ENCODE measurements at regions of chr16 and their contacts with region 1.

Region 1: DNA sequence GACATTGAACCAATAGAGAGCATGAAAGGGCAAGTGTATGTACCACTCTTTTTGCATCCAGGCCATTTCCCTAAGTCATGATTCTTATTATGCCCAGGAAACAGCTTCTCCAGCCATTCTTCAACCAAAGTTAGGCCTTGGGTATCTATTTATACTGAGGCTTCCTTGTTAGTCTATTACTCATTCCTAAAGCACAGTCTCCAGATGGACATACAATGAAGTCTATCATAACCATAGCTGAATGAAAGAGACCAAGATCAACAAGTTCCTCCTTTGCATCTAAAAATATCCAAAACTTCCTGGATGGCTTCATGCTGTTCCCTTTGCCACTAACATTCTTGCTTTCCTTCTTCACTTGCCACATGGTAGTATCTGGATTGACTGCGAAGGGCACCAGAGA is 265.9 kb downstream of the CDH8 start:
- DNase-seq: no peak
- H3K4me3 ChIP-seq: no peak overlapping the region
- H3K27ac ChIP-seq: no peak overlapping the region
- H3K4me1 ChIP-seq: no peaks in the 10 kb centered on the region
- H3K27me3 ChIP-seq: no peaks in the 10 kb centered on the region
- CTCF ChIP-seq: no peak

Region 2: DNA sequence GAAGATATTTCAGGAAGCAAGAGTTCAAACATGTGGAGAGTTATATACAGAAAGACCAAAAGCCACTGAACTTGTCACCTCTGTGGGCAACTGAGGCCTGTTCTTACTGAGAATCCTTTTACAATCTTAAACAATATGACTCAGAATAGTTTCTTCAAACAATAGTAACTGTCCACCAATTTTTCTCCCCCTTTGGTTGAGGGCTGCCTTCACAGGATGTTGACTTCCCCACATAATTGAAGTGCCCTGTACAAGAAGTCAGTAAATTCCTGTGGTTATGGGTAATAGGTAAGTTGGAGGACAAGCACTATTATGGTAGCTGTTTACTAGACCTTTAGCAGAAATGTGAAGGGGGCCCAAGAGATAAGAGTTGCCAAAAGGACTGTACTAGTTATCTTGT is 50.1 kb after region 1 on chr16:
- CTCF ChIA-PET with region 1: no interaction called
- dilution Hi-C with region 1: loop called (anchors 5 kb)
- in situ Hi-C with region 1: no loop called
- intact Hi-C with region 1: no loop called
- DNase-seq: peak; percentile 4
- H3K4me3 ChIP-seq: no peak overlapping the region
- H3K27ac ChIP-seq: no peak overlapping the region
- H3K4me1 ChIP-seq: peaks cover 6% of the 10 kb centered on the region
- H3K27me3 ChIP-seq: no peaks in the 10 kb centered on the region
- CTCF ChIP-seq: no peak